ENCODE measurements at regions of chr14 and their contacts with region 1.

Region 1: GRCh38 chr14:89351516-89352404 is 65.3 kb downstream of the FOXN3 start:
- DNase-seq: peak; percentile 67 to 73
- H3K4me3 ChIP-seq: peak overlapping the region; percentile 11; the same call in 1 of the 2 replicates
- H3K4me3 Mint-ChIP-seq: peak overlapping the region; percentile 62
- H3K27ac Mint-ChIP-seq: peak overlapping the region; percentile 73
- H3K4me1 ChIP-seq: peaks cover 15% of the 10 kb centered on the region
- H3K4me1 Mint-ChIP-seq: peaks cover 7% of the 10 kb centered on the region
- H3K27me3 ChIP-seq: no peaks in the 10 kb centered on the region
- H3K27me3 Mint-ChIP-seq: no peaks in the 10 kb centered on the region
- CTCF ChIP-seq: peak in 1 of 2 experiments; percentile 3

Region 2: DNA sequence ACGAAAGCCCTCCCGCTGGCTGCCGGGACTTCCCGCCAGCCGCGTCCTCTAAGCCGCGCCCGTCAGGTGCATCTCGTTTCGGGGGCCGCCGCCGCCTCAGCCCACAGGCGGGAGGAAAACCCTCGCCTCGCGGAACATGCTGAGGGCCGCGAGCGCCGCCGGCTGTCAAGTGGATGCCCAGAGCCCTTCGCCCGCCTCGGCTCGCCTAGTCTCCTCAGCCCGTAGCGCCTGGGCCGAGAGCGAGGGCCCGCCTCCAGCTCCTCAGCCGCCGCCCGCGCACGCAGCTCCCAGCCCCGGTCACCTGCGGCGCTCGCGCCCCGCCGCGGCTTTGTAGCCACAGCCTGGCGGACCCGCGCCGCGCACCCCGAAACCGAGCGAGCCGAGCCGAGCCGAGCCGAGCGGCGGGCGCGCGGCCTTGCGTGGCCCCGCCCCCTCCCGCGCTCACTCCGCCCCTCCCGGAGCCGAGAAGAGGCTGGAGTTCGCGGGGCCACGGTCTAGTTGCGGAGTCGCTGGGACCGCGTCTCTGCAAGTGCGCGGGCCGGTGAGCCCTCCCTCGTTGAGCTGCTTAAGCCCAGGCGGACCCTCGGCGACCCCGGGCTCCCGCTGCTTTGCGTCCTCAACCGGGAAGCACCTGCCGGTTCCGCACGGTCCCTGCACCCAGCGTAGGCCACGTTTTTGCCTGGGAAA is 559.0 kb before region 1 on chr14 and contains the start of gene EML5:
- CTCF ChIA-PET with region 1: no interaction called
- POLR2A ChIA-PET with region 1: no interaction called
- intact Hi-C with region 1: loop called (anchors 5 kb)
- DNase-seq: peak; percentile 78 to 91
- H3K4me3 ChIP-seq: peak within 1 kb of the TSS; percentile 60
- H3K4me3 Mint-ChIP-seq: peak within 1 kb of the TSS; percentile 67
- H3K27ac Mint-ChIP-seq: no peak within 1 kb of the TSS
- H3K4me1 ChIP-seq: no peaks in the 10 kb centered on the region
- H3K4me1 Mint-ChIP-seq: no peaks in the 10 kb centered on the region
- H3K27me3 ChIP-seq: no peaks in the 10 kb centered on the region
- H3K27me3 Mint-ChIP-seq: peaks cover 4% of the 10 kb centered on the region
- CTCF ChIP-seq: peak; percentile 3 to 37
- total RNA-seq, gene EML5: 0.11 and 0.28 TPM in 2 replicates

Region 3: GRCh38 chr14:89368490-89369477 is 17.0 kb after region 1 on chr14:
- CTCF ChIA-PET with region 1: interaction called, 3 read pairs
- POLR2A ChIA-PET with region 1: no interaction called
- intact Hi-C with region 1: loop called (anchors 1 kb)
- DNase-seq: peak; percentile 72 to 87
- H3K4me3 ChIP-seq: no peak overlapping the region
- H3K4me3 Mint-ChIP-seq: peak overlapping the region; percentile 53
- H3K27ac Mint-ChIP-seq: peak overlapping the region; percentile 71
- H3K4me1 ChIP-seq: peaks cover 24% of the 10 kb centered on the region
- H3K4me1 Mint-ChIP-seq: peaks cover 13% of the 10 kb centered on the region
- H3K27me3 ChIP-seq: no peaks in the 10 kb centered on the region
- H3K27me3 Mint-ChIP-seq: no peaks in the 10 kb centered on the region
- CTCF ChIP-seq: no peak

Region 4: DNA sequence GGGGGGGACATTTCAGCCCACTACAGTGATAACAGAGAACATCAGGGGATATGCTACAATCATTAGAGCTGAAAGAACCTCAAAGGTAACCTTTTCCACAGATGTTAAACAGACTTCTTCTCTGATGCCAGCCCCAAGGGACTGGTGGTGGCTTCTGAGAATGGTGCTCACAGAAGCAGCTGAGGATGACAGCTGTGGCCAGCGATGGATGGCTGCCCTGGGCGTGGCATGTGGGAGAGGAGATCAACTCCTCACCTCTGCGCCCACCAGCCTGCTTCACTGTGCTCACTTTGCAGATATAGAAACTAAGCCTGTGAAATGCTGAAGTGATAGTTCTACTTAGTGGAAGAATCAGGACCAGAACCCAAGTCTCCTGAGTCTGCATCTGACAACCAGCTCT is 32.3 kb after region 1 on chr14:
- CTCF ChIA-PET with region 1: no interaction called
- POLR2A ChIA-PET with region 1: no interaction called
- intact Hi-C with region 1: no loop called
- DNase-seq: no peak
- H3K4me3 ChIP-seq: no peak overlapping the region
- H3K4me3 Mint-ChIP-seq: no peak overlapping the region
- H3K27ac Mint-ChIP-seq: no peak overlapping the region
- H3K4me1 ChIP-seq: no peaks in the 10 kb centered on the region
- H3K4me1 Mint-ChIP-seq: no peaks in the 10 kb centered on the region
- H3K27me3 ChIP-seq: no peaks in the 10 kb centered on the region
- H3K27me3 Mint-ChIP-seq: no peaks in the 10 kb centered on the region
- CTCF ChIP-seq: no peak